ENCODE measurements at regions of chr2 and their contacts with region 1.

Region 1: DNA sequence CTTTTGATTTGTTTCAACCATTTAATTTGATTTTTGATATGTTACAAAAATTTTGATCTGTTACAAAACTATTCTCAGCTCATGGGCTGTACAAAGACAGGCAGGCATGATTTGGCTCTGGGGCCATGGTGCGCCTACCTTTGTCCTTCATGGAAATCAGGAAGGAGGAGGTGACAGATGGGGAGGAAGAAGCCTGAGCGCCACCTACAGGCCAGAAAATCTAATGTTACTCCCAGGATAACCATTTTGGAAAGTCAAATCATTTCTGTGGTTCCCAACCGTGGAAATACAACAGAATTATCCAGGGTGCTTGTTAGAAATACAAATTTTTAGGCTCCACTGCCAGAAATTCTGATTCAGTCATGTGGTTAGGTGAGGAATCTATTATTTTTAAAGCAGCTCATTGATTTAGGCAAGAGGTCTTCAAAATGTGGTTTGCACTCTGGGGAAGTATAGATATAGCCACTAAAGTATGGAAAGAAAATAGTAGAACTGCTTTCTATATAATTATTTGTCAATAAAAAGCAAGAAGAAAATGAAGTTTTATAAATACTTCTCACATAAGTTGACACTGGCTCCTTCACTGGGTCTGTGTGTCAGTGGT is 93.9 kb downstream of the EVA1A start:
- DNase-seq: peak; percentile 13
- H3K4me3 Mint-ChIP-seq: no peak overlapping the region
- H3K27ac Mint-ChIP-seq: no peak overlapping the region
- H3K4me1 Mint-ChIP-seq: no peaks in the 10 kb centered on the region
- H3K27me3 Mint-ChIP-seq: peaks cover 13% of the 10 kb centered on the region

Region 2: DNA sequence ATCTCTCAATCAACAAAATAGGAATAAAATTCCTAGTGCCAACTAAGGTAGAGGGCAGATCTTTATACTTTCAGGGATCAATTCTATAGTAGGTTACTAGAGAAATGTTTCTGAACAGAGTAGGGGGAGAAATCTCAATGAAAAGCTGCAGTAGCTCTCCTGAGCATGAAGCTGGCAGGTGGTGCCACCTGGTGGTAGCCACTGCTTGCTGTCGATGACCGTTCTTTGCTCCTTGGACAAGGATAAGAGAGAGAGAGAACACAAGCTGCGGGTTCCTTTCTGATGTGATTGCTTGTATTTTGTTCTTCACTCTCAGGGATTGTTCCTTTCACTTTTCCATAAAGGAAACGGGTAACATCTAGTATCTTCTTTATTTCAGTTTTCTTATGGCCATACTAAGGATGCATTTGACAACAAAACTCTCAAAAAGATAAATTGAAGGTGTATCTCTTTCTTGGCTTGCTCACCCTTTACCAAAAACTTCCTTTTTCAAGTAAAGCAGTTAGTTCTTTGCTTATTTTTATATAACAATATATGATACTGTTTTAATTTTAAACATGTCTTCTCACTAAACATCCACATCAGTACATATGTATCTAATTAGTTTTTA is 161.2 kb after region 1 on chr2:
- CTCF ChIA-PET with region 1: interaction called, 4 read pairs
- POLR2A ChIA-PET with region 1: no interaction called
- intact Hi-C with region 1: loop called (anchors 1 kb)
- DNase-seq: peak; percentile 72
- H3K4me3 Mint-ChIP-seq: no peak overlapping the region
- H3K27ac Mint-ChIP-seq: no peak overlapping the region
- H3K4me1 Mint-ChIP-seq: no peaks in the 10 kb centered on the region
- H3K27me3 Mint-ChIP-seq: peaks cover 23% of the 10 kb centered on the region